BJ (cell line): ENCODE measurements at regions of chr20 and their contacts with region 1.

Region 1: GRCh38 chr20:46307139-46307998 is 929 bp downstream of the CDH22 start:
- DNase-seq: no peak
- H3K4me3 ChIP-seq: no peak overlapping the region
- H3K27me3 ChIP-seq: peaks cover 43% of the 10 kb centered on the region
- CTCF ChIP-seq: peak; percentile 89

Region 2: GRCh38 chr20:46411637-46412036 is 104.3 kb after region 1 on chr20:
- CTCF ChIA-PET with region 1: interaction called, 12 read pairs
- POLR2A ChIA-PET with region 1: no interaction called
- DNase-seq: no peak
- H3K4me3 ChIP-seq: no peak overlapping the region
- H3K27me3 ChIP-seq: peaks cover 3% of the 10 kb centered on the region; the same call in 1 of the 2 replicates
- CTCF ChIP-seq: no peak